Body of pancreas (tissue), 4 donors: ENCODE measurements at regions of chr18 and their contacts with region 1.

Region 1: GRCh38 chr18:27057519-27058234 is 127.4 kb downstream of the CHST9 start:
- DNase-seq: peak in 2 of 4 donors; percentile 18 to 25
- ATAC-seq: peak; percentile 68
- H3K4me3 ChIP-seq: no peak overlapping the region
- H3K27ac ChIP-seq: peak overlapping the region in 3 of 4 donors; percentile 33 to 64 (median 39)
- H3K4me1 ChIP-seq: peaks cover 12% of the 10 kb centered on the region
- H3K27me3 ChIP-seq: no peaks in the 10 kb centered on the region
- CTCF ChIP-seq: no peak
- POLR2A ChIP-seq: no peak

Region 2: DNA sequence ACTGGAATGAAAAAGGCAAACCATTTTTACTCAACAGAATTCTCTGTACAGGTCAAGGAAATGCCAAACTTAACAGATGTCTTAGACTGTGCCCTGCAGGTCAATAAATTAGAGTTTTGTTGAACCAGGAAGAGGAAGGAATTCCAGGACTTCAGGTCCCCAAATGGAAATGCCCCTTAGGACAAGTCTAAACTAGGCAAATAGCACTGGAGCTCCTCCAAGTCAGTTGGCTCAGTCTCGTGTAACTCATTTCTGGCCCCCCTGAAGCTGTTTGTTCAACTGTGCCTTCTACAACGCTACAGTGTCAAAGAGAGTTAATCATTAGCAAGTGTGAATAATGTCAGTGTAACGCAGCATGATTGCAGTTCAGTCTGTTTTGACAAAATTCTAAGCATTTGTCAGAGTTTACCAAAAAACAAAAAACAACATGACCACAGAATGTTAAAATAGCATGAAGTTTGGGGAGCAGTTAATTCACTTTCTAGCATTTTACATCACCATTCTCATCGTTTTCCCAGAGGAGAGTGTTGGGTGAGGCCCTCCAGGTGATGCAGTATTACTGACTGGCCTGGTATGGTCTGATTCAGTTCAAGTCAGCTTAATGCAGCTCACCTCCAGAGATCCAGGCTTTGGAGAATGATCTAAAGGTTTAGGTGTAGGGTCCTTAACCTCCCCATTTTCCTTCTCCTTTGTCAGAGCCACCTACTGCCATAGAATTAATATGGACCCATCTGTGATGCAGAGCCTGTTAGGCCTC is 300.2 kb before region 1 on chr18:
- intact Hi-C with region 1: no loop called
- DNase-seq: peak; percentile 47 to 79 (median 69)
- ATAC-seq: peak; percentile 87
- H3K4me3 ChIP-seq: no peak overlapping the region
- H3K27ac ChIP-seq: peak overlapping the region; percentile 37 to 79 (median 70)
- H3K4me1 ChIP-seq: peaks cover 54% of the 10 kb centered on the region
- H3K27me3 ChIP-seq: no peaks in the 10 kb centered on the region
- CTCF ChIP-seq: no peak
- POLR2A ChIP-seq: no peak

Region 3: GRCh38 chr18:27301609-27302378 is 244.1 kb after region 1 on chr18:
- intact Hi-C with region 1: loop called (anchors 5 kb)
- DNase-seq: no peak
- ATAC-seq: no peak
- H3K4me3 ChIP-seq: no peak overlapping the region
- H3K27ac ChIP-seq: no peak overlapping the region
- H3K4me1 ChIP-seq: no peaks in the 10 kb centered on the region
- H3K27me3 ChIP-seq: no peaks in the 10 kb centered on the region
- CTCF ChIP-seq: no peak
- POLR2A ChIP-seq: no peak